GM10248 (cell line): ENCODE measurements at regions of chr5 and their contacts with region 1.

Region 1: GRCh38 chr5:113617191-113617796 is 103.8 kb downstream of the YTHDC2 start:
- DNase-seq: no peak
- CTCF ChIP-seq: no peak

Region 2: GRCh38 chr5:113394658-113395057 is 222.6 kb before region 1 on chr5:
- CTCF ChIA-PET with region 1: no interaction called
- POLR2A ChIA-PET with region 1: no interaction called
- DNase-seq: no peak
- CTCF ChIP-seq: no peak

Region 3: DNA sequence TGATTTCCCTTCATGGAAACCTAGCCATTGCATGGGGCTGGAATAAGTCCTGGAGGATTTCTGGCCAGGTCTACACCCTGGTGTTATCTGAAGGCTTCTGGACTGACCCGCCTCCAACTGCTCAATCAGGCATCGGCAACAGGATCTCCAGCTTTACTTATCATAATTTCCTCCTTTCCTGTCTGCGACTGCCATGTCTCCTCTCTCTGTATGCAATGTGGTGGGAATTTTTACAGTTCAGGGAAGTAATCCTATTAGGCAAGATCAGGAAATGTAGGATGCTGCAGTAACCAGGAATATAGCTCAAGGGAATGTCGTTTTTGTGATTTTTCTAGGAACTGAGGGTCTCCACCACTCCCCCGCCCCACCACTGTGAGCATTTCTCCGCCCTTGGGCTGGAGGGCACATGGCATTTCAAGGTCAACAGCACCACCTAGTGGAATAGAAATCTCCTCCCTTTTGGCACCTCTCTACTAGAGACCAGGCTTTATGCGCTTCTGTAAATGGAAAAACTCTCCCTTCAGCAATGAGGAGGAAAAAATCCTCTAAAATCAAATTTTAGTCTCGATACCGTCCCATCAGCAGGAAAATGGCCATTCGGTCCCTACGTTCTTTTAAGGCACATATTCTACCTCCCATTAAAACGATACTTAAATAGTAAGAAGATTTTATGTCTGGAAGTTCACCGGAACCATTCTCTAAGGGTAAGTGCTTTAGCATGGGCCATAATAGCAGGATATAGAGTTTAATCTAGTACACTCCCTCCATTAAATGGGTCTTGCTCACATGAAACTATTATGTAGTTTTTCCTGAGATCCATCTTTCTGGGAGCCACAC is 10.8 kb before region 1 on chr5:
- CTCF ChIA-PET with region 1: interaction called, 11 read pairs
- POLR2A ChIA-PET with region 1: no interaction called
- DNase-seq: peak; percentile 32
- CTCF ChIP-seq: peak; percentile 67